ENCODE measurements at regions of chr10 and their contacts with region 1.

Region 1: GRCh38 chr10:50367732-50368131 is 116.4 kb upstream of the ASAH2 start:
- DNase-seq: no peak
- CTCF ChIP-seq: peak; percentile 33

Region 2: DNA sequence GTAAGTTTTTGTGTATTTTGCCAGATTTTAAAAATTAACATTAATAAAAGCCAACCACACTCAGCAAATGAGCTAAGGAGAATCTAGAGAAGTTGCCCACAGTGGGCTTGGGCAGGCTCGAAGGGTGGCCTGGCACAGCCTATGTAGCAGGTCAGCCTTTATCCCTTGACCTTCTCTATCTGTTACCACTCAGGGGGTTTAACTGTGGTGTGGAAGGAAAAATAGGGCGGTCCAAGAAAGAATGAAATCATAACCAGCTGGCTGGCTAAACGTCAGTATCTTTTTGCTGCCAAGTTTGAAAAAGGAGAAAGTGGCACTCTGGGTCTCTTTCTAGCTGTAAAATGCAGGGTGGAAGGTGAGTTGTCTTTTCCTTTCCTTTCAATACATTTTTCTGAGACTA is 13.9 kb after region 1 on chr10:
- CTCF ChIA-PET with region 1: interaction called, 15 read pairs
- POLR2A ChIA-PET with region 1: no interaction called
- DNase-seq: no peak
- CTCF ChIP-seq: no peak

Region 3: DNA sequence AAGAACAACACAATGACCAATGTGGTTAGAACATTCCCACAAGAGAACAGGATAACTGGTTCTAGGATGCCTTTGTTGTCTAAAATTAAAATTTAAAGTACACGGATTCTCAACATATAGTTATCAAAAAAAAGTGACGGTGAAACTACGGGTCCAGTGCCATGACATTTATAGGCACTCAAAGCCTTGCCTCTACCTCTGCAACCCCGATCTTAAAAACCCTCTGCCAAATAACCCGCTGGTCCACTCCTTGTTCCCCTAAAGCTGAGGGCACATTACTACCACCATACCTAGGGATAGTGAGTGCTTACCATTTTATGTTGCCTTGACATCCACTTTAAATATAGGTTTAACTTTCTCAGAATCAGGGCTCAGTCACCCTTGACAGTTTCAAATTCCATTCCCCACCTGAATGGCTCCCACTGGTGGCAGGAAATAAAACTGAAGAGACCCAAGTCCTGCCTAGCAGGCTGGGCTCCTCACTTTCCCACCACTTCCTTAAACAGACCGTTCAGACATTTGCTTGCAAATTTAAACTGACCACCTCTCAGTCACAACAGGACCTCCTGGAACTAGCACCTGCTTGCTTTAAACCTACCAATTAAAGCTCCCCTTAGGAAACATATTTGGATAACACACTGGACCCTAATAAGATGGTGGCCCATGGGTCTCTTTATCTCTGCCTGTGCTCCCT is 53.4 kb after region 1 on chr10:
- CTCF ChIA-PET with region 1: interaction called, 10 read pairs
- POLR2A ChIA-PET with region 1: no interaction called
- DNase-seq: peak; percentile 48
- CTCF ChIP-seq: peak; percentile 74

Region 4: GRCh38 chr10:50480054-50481007 is 112.6 kb after region 1 on chr10:
- CTCF ChIA-PET with region 1: no interaction called
- POLR2A ChIA-PET with region 1: no interaction called
- DNase-seq: no peak
- CTCF ChIP-seq: no peak

Measured in GM10248 (cell line).